PC-9 (cell line): ENCODE measurements at regions of chr5 and their contacts with region 1.

Region 1: DNA sequence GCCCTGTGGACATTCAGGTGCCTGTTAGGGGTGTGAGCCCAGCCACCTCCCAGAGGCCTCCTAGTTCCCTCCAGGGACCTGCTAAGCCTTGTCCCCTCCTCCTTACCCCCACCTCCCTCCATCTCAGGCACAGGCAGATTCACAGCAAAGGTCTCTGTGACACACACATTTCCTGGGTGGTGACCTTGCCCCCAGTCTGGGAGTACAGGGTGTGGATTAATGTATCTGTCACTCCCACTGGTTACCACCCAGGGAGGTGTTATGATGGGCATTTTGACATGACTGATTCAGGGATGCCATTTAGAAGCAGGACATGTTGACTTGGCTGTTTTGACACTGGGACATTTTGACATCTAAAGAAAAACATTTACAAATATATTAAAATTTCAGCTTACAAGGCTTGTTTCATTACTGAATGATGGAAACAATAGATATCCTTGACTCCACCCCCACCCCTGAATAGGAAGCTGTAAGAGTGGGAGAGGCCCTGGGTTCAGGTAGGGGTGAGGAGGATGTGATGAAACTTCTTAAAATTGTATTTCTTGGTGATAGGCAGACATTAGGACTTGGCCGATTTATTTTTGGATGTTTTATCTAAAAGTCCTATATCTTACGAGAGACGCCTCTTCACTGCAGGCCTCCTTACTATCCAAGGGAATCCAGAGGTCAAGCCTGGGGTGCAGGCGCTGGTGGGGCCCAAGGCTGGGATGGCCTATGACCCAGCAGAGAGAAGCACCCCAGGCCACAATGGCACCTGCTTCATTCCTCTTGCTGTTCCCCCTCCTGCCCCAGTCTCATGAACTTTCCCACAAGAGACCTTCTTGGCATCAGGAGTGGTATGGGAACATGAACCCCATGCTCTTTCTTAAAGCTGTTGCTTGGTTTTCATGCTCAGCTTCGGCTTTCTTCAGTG is 101.9 kb downstream of the MACROH2A1 start:
- DNase-seq: no peak
- H3K4me3 ChIP-seq: no peak overlapping the region
- H3K27ac ChIP-seq: no peak overlapping the region
- H3K4me1 ChIP-seq: no peaks in the 10 kb centered on the region
- H3K27me3 ChIP-seq: no peaks in the 10 kb centered on the region
- CTCF ChIP-seq: no peak

Region 2: GRCh38 chr5:135263022-135263668 is 34.0 kb before region 1 on chr5:
- CTCF ChIA-PET with region 1: no interaction called
- POLR2A ChIA-PET with region 1: no interaction called
- intact Hi-C with region 1: loop called (anchors 5 kb)
- DNase-seq: no peak
- H3K4me3 ChIP-seq: no peak overlapping the region
- H3K27ac ChIP-seq: no peak overlapping the region
- H3K4me1 ChIP-seq: no peaks in the 10 kb centered on the region
- H3K27me3 ChIP-seq: no peaks in the 10 kb centered on the region
- CTCF ChIP-seq: no peak